GM10248 (cell line): ENCODE measurements at regions of chr9 and their contacts with region 1.

Region 1: GRCh38 chr9:93978551-93978950 is 23.4 kb upstream of the BARX1 start:
- DNase-seq: no peak
- CTCF ChIP-seq: no peak

Region 2: DNA sequence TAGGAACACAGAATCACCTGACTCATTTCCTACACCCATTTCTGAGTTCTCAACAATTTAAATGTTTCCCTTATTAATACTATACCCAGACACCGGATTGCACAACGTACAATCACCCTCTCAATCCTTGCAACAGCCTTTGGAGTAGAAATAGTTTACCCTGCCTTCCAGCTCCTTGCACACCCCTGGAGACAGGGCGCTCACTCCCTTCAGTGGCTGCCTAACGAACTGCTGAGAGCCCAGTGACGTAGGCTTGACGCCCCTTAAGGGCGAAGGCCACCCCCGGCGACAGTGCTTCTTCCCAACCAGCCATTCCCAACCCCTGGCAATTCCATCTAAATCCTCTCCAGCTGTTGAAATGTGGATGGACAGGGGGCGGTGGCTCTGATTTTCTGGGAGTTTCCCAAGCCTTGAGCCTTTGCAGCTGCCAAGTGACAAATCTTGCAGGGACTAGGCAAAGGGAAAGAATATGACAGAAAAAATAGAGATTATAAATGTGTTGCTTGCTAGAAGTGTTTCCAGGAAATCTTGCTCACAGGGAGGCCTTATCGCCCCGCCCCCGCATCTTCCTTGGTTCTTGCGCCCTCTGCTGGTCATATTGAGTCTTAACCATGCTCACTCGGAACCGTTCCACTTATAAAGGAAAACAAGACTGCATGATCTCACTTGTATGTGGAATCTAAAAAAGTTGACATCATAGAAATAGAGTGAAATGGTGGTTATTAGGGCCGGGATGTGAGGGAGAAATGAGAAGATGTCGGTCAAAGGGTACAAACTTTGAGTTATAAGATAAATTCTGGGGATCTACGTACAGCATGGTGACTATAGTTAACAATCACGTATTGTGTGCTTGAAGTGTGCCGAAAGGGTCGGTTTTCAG is 15.8 kb before region 1 on chr9:
- CTCF ChIA-PET with region 1: interaction called, 11 read pairs
- POLR2A ChIA-PET with region 1: interaction called, 4 read pairs
- DNase-seq: peak; percentile 82
- CTCF ChIP-seq: peak; percentile 79

Region 3: DNA sequence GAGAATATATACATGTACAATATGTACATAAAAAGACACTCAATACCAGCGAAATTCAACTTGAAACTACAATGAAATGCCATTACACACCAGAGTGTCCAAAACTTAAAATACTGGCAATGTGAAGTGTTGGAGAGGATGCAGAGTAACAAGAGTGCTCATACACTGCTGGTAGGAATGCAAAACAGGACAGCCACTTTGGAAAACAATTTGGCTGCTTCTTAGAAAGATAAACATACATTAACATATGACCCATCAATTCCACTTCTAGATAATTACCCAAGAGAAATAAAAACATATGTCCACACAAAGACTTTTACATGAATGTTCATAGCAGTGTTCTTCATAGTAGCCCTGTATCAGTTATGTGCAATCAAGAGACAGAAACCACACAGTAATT is 16.0 kb after region 1 on chr9:
- CTCF ChIA-PET with region 1: no interaction called
- POLR2A ChIA-PET with region 1: no interaction called
- DNase-seq: no peak
- CTCF ChIP-seq: no peak